ENCODE measurements at regions of chr5 and their contacts with region 1.

Region 1: GRCh38 chr5:35777358-35778087 is 79.2 kb upstream of the IL7R start:
- DNase-seq: peak; percentile 70
- H3K4me3 ChIP-seq: no peak overlapping the region
- H3K27ac ChIP-seq: no peak overlapping the region
- H3K4me1 ChIP-seq: peaks cover 8% of the 10 kb centered on the region
- H3K27me3 ChIP-seq: no peaks in the 10 kb centered on the region
- CTCF ChIP-seq: peak; percentile 43 to 53
- POLR2A ChIP-seq: no peak

Region 2: DNA sequence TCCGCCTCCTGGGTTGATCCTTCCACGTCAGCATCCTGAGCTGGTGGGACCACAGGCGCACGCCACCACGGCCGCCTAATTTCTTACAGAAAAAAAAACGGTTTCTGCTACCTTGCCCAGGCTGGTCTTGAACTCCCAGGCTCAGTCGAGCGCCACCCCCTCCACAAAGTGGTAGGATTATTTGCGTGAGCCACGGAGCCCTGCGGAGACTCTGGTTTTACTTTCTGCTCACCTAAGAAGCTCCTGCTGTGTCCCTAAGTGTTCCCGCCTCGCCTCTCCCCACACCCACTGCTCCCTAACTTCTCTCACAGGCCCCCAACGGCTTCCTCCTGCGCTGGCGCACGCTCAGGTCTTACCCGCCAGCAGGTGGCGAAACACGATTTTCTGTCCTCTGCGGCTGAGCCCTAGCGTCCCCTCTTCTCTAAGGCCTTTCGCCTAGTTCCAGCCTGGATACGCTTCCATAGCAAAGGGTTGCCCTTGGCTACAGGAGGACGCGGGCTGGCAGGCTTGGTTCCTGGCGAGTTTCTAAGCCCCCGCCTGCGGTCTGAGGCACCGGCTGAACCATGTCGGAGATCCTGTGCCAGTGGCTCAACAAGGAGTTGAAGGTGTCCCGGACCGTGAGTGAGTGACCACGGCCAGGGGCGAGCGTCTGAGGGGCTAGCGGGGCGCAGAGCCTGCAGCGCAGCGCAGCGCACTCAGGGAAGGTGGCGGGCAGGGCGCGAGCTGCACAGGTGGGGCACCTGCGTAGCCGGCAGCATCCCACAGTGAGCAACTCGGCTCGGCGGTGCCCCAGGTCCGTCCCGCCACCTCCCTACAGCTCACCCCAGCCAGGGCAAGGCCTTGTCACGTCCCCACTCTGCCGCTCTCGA is 159.9 kb before region 1 on chr5 and contains the start of gene SPEF2:
- CTCF ChIA-PET with region 1: interaction called, 3 read pairs
- POLR2A ChIA-PET with region 1: no interaction called
- dilution Hi-C with region 1: no loop called
- intact Hi-C with region 1: loop called (anchors 2 kb)
- DNase-seq: peak; percentile 87
- H3K4me3 ChIP-seq: peak within 1 kb of the TSS in 2 of 3 experiments; percentile 39 to 49
- H3K27ac ChIP-seq: no peak within 1 kb of the TSS
- H3K4me1 ChIP-seq: no peaks in the 10 kb centered on the region
- H3K27me3 ChIP-seq: no peaks in the 10 kb centered on the region
- CTCF ChIP-seq: peak; percentile 86 to 87
- POLR2A ChIP-seq: no peak
- total RNA-seq, gene SPEF2: 0.73 and 0.76 TPM in 2 replicates

Region 3: GRCh38 chr5:35651002-35651756 is 126.3 kb before region 1 on chr5:
- CTCF ChIA-PET with region 1: interaction called, 12 read pairs
- POLR2A ChIA-PET with region 1: no interaction called
- dilution Hi-C with region 1: no loop called
- intact Hi-C with region 1: loop called (anchors 5 kb)
- DNase-seq: peak; percentile 57
- H3K4me3 ChIP-seq: no peak overlapping the region
- H3K27ac ChIP-seq: no peak overlapping the region
- H3K4me1 ChIP-seq: no peaks in the 10 kb centered on the region
- H3K27me3 ChIP-seq: no peaks in the 10 kb centered on the region
- CTCF ChIP-seq: peak; percentile 35 to 68
- POLR2A ChIP-seq: no peak

Region 4: DNA sequence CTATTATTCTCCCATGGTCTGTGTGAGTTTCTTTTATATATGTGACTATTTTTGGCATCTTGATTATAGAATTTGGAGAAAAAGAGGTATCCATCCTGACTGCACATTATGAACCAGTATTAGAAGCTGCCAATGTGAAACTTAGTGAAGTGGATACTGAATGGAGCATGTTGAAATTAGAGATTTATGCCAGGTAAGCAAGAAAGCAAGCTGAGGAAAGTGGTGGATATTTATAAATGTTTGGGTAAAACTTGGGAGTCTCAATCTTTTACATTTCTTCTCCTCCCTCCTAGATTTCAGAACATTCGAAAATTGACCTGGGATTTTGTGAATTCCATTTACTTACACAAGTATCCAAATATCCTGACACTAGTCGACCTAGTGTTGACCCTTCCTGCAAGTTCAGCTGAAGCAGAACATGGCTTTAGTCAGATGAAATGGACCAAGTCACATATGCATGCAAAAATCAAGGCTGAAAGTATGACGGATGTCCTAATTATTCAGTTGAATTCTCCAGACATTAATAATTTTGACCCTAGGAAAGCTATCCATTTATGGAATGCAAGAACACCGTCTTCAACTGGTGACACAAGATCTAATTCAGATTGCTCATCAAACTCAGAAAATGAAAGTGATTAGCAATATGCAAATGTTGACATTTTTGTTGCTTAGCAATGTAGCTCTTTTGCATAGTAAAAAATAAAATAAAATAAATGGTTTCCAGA is 12.4 kb after region 1 on chr5:
- CTCF ChIA-PET with region 1: interaction called, 11 read pairs
- POLR2A ChIA-PET with region 1: no interaction called
- dilution Hi-C with region 1: no loop called
- intact Hi-C with region 1: no loop called
- DNase-seq: no peak
- H3K4me3 ChIP-seq: no peak overlapping the region
- H3K27ac ChIP-seq: no peak overlapping the region
- H3K4me1 ChIP-seq: peaks cover 11% of the 10 kb centered on the region
- H3K27me3 ChIP-seq: no peaks in the 10 kb centered on the region
- CTCF ChIP-seq: no peak
- POLR2A ChIP-seq: no peak

Region 5: GRCh38 chr5:35815089-35815936 is 37.8 kb after region 1 on chr5:
- CTCF ChIA-PET with region 1: interaction called, 9 read pairs
- POLR2A ChIA-PET with region 1: no interaction called
- dilution Hi-C with region 1: no loop called
- intact Hi-C with region 1: loop called (anchors 1 kb)
- DNase-seq: peak; percentile 59
- H3K4me3 ChIP-seq: no peak overlapping the region
- H3K27ac ChIP-seq: no peak overlapping the region
- H3K4me1 ChIP-seq: no peaks in the 10 kb centered on the region
- H3K27me3 ChIP-seq: no peaks in the 10 kb centered on the region
- CTCF ChIP-seq: peak; percentile 61 to 79
- POLR2A ChIP-seq: no peak

Region 6: DNA sequence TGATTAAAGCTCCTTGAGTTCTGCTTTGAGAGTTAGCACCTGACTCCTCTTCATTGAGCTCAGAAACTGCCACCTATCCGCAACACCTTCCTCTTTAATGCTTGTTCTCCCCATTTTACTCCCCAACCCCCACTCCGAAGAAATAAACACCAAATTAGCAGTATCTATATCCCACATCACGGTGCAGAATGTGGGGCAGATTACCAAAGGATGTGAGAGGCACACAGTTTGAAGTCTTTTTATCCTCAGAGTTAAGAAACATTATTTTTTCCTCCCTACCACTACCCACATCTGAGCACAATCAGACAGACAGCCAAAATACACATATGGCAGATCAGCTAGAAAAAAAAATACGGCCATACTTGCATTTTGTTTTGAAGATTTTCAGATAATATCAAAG is 53.1 kb after region 1 on chr5:
- CTCF ChIA-PET with region 1: no interaction called
- POLR2A ChIA-PET with region 1: no interaction called
- dilution Hi-C with region 1: no loop called
- intact Hi-C with region 1: no loop called
- DNase-seq: no peak
- H3K4me3 ChIP-seq: no peak overlapping the region
- H3K27ac ChIP-seq: no peak overlapping the region
- H3K4me1 ChIP-seq: no peaks in the 10 kb centered on the region
- H3K27me3 ChIP-seq: peaks cover 0 to 2% of the 10 kb centered on the region in 2 experiments
- CTCF ChIP-seq: no peak
- POLR2A ChIP-seq: no peak

Region 7: DNA sequence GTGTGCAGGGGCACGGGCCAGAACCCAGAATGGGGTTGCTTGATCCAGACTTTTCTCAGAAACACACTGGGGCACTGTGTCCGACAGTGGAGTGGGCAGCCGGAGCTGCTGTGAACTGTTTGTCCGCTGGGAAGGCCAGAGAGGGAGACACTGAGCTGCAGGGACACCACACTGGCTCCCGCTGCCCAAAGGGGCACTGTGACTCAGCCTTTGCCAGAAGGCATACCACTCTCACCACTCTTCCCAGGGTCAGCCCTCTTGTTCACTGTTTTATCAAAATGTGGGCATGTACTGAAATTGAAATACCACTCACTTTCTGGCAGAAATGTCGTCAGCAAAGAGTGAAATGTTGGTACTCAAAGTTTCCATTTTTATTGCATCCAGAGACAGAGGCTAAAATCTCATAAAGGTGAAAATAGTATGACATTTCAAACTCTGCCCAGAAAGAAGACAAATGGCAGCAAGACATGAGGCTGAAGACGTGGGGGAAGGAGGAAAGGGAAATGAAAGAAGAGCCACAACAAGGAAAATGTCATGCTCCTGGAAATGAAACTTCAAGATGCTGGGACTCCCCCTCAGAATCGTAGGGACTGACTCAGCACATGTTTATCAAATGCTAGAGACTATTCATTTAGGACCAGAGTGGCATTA is 74.7 kb after region 1 on chr5:
- CTCF ChIA-PET with region 1: interaction called, 16 read pairs
- POLR2A ChIA-PET with region 1: no interaction called
- dilution Hi-C with region 1: no loop called
- intact Hi-C with region 1: loop called (anchors 2 kb)
- DNase-seq: no peak
- H3K4me3 ChIP-seq: no peak overlapping the region
- H3K27ac ChIP-seq: no peak overlapping the region
- H3K4me1 ChIP-seq: peaks cover 10% of the 10 kb centered on the region
- H3K27me3 ChIP-seq: no peaks in the 10 kb centered on the region
- CTCF ChIP-seq: no peak
- POLR2A ChIP-seq: no peak

Region 8: GRCh38 chr5:35919191-35919590 is 141.7 kb after region 1 on chr5:
- CTCF ChIA-PET with region 1: interaction called, 224 read pairs
- POLR2A ChIA-PET with region 1: no interaction called
- dilution Hi-C with region 1: no loop called
- intact Hi-C with region 1: no loop called
- DNase-seq: no peak
- H3K4me3 ChIP-seq: no peak overlapping the region
- H3K27ac ChIP-seq: no peak overlapping the region
- H3K4me1 ChIP-seq: no peaks in the 10 kb centered on the region
- H3K27me3 ChIP-seq: peaks cover 0 to 2% of the 10 kb centered on the region in 2 experiments
- CTCF ChIP-seq: no peak
- POLR2A ChIP-seq: no peak

Measured in endothelial cell of umbilical vein (primary cell).